ENCODE measurements at regions of chr18 and their contacts with region 1.

Region 1: GRCh38 chr18:74551936-74552555 is 17.7 kb downstream of the CNDP1 start:
- DNase-seq: peak; percentile 74 to 84
- ATAC-seq: peak; percentile 84 to 94 (median 90)
- H3K4me3 ChIP-seq: no peak overlapping the region
- H3K27ac ChIP-seq: no peak overlapping the region
- H3K4me1 ChIP-seq: no peaks in the 10 kb centered on the region
- H3K27me3 ChIP-seq: peaks cover 0 to 21% (median 2%) of the 10 kb centered on the region in 3 donors
- CTCF ChIP-seq: peak; percentile 88

Region 2: DNA sequence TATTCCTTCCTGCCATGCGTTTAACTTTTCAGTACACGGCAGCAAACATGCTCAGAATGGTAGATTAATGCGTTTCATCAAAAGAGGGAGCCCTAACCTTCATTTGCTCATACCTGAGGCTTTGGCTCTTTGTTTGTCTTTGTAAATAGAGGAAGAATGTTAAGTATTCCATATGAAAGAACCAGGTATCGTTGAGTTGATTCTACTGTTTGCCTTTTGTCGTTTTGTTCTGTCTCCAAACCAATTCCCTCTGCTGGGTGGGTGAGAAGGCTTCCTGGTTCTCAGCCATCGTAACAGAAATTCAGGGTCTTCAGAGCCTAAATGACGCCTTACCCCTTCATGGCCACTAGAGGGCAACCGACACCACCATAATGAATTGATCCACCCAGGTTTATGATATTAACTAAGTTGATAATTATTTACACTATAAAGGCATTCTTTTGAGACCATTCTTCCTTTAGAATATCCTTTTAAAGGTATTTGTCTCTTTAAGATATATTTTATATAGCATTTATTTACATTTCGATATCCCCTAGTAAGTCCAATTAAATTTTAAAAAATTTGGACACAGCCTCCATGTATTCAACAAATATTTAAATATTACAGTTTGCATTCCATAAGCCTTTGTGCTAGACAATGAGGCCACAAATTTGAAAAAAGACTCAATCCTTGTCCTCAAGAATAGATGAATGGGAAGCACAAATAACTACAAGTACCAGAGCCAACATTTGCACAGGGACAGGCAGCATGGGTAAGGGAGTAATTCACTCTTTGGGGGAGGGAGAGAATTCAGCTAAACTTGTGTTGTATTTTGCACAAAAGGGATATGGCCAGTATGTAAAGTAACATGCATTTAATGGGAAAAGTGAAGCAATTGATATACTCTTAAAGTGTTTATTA is 355.6 kb before region 1 on chr18:
- intact Hi-C with region 1: loop called (anchors 2 kb)
- DNase-seq: no peak
- ATAC-seq: peak; percentile 47 to 80 (median 58)
- H3K4me3 ChIP-seq: no peak overlapping the region
- H3K27ac ChIP-seq: no peak overlapping the region
- H3K4me1 ChIP-seq: no peaks in the 10 kb centered on the region
- H3K27me3 ChIP-seq: peaks cover 0 to 4% (median 0%) of the 10 kb centered on the region in 3 donors
- CTCF ChIP-seq: peak; percentile 94

Region 3: DNA sequence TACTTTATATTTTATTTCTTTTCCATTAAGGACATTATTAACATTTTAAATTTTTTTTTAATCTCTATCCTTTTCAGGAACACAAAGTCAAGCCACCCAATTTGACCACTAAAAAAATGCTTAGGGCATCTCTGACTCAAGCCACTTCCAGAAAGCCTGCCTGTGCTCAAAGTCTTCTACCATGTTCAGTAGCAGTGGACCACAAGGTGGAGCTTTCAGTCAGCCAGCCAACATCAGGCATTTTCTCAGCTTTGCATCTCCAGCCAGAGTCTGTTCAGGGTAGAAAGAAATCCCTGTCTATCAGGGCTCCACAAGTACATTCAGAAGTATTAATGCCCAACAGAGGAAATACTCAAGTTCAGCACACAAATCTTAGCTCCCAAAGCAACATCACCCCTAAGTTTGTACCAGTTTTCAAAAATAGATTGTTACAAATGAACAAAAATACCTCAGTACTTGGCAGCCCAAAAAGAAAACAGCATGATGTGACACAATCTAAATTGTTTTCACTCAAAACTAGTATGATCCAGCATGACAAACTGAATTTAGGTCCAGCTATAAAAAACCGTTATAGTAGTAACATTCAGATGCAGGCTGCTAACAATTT is 198.8 kb before region 1 on chr18:
- intact Hi-C with region 1: loop called (anchors 2 to 10 kb)
- DNase-seq: no peak
- ATAC-seq: peak; percentile 51 to 74 (median 52)
- H3K4me3 ChIP-seq: no peak overlapping the region
- H3K27ac ChIP-seq: no peak overlapping the region
- H3K4me1 ChIP-seq: no peaks in the 10 kb centered on the region
- H3K27me3 ChIP-seq: no peaks in the 10 kb centered on the region
- CTCF ChIP-seq: peak; percentile 63

Region 4: DNA sequence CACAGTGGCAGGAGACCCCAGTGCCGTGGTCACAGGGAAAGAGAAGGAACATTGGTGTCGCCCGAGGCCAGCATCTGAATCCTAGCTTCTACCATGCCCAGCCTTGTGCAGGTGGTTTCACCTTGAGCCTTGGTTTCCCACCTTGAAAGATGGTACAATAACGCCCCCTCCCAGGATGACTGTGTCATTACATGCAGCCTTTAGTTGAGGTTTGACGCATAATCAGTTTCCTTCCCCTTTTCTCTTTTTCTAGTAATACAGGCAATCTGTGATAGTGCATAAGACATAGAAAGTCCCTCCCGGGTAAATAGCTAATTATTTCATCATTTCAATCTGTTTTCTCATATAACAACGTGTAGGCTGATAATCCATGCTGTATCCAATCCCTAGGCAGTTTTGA is 15.8 kb after region 1 on chr18:
- intact Hi-C with region 1: no loop called
- DNase-seq: no peak
- ATAC-seq: no peak
- H3K4me3 ChIP-seq: no peak overlapping the region
- H3K27ac ChIP-seq: no peak overlapping the region
- H3K4me1 ChIP-seq: no peaks in the 10 kb centered on the region
- H3K27me3 ChIP-seq: peaks cover 0 to 2% (median 0%) of the 10 kb centered on the region in 3 donors
- CTCF ChIP-seq: no peak

Region 5: GRCh38 chr18:74806700-74807416 is 254.8 kb after region 1 on chr18:
- intact Hi-C with region 1: no loop called
- DNase-seq: no peak
- ATAC-seq: peak; percentile 80 to 99 (median 90)
- H3K4me3 ChIP-seq: no peak overlapping the region
- H3K27ac ChIP-seq: no peak overlapping the region
- H3K4me1 ChIP-seq: peaks cover 3% of the 10 kb centered on the region
- H3K27me3 ChIP-seq: no peaks in the 10 kb centered on the region
- CTCF ChIP-seq: no peak

Measured in psoas muscle (tissue), 8 donors.